ENCODE measurements at regions of chr20 and their contacts with region 1.

Region 1: GRCh38 chr20:18496740-18497592 is at the start of gene RBBP9:
- DNase-seq: peak; percentile 86
- H3K4me3 Mint-ChIP-seq: peak within 1 kb of the TSS; percentile 96
- H3K27ac Mint-ChIP-seq: peak within 1 kb of the TSS; percentile 84
- H3K4me1 Mint-ChIP-seq: peaks cover 24% of the 10 kb centered on the region
- H3K27me3 Mint-ChIP-seq: peaks cover 3% of the 10 kb centered on the region

Region 2: DNA sequence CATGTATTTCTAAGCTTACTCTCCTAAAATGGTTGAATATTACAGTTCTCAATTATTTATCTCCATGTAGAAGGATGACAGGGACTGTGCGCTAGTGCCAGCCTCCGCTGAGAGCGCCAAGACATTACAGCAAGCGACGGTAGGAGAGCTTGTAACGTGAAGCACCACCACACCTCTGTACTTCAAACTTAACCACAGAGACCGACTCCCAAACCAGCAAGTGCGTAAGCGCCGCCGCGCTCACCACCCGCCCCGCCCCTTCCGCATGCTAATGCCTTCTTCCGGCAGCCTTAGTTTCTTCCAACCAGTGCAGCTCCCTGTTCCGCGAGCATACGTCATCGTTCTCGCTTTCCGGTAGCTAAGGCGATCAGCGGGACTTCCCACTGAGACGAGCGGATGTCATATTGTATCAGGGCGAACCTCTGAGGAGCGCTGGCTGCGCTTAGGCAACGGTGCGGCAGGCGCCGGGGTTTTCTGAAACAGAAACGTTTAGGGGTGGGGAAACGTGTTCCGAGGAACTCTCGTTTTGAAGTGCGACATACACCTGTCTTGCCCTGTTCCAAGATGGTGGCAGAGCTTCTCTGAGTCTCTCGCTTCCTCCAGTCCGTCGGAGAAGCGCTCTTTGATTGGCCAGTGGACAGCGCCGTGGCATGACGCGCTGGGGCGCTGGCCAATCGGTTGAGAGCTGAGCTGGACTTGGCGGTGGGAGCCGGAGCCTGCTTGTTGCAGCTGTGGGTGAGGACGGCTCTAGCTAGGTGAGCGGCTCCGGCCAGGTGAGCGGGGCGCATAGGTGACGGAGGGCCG is 10.5 kb after region 1 on chr20 and contains the start of gene SEC23B:
- CTCF ChIA-PET with region 1: interaction called, 17 read pairs
- DNase-seq: peak; percentile 98
- H3K4me3 Mint-ChIP-seq: peak within 1 kb of the TSS; percentile 99
- H3K27ac Mint-ChIP-seq: peak within 1 kb of the TSS; percentile 100
- H3K4me1 Mint-ChIP-seq: peaks cover 58% of the 10 kb centered on the region
- H3K27me3 Mint-ChIP-seq: peaks cover 11% of the 10 kb centered on the region